ENCODE measurements at regions of chr14 and their contacts with region 1.

Region 1: GRCh38 chr14:71555654-71556559 is 376.3 kb upstream of the RGS6 start:
- DNase-seq: peak; percentile 98
- ATAC-seq: peak; percentile 87
- H3K4me3 ChIP-seq: no peak overlapping the region
- H3K27ac ChIP-seq: peak overlapping the region; percentile 98
- H3K4me1 ChIP-seq: peaks cover 49% of the 10 kb centered on the region
- H3K27me3 ChIP-seq: no peaks in the 10 kb centered on the region
- CTCF ChIP-seq: no peak
- EP300 ChIP-seq: peak; percentile 60 to 87; a peak in 3 of 4 replicates
- POLR2A ChIP-seq: no peak
- RAD21 ChIP-seq: peak; percentile 24; the same call in 1 of the 2 replicates

Region 2: DNA sequence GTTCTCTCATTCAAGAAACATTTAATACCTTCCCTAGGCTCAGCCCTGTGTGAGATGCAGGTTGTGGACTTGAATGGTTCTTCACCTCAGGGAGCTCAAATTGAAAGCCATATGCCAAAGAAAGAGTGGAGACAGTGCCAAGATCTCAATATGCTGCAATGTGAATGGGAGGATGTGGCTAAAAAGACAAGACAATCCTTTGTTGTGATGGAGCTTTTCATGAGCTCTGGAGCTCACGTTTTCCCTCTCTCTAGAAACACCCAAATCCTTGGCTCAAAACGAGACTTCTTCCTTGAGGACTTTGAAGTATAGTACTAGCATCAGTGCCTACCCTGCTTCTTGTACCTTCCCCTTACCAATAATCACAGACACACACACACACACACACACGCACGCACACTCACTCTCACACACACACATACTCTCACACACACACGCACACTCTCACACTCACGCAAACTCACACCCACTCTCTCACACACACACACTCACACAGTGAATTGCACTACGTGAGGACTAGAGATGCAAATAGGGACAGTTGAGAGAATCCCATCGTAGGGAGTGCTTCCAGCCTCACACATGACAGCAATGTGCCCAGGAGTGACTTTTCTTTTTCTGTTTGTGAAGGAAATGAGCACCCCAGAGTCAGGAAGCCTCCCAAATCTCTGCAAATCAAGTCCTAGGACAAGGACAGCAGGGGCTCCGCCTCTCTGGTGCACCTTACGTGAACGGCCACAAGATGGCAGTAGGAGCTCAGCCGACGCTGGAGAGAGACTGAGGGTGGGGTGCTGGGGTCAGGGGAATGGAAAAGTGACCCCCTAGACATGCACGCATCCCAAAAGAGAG is 417.2 kb before region 1 on chr14:
- CTCF ChIA-PET with region 1: interaction called, 5 read pairs
- POLR2A ChIA-PET with region 1: interaction called, 3 read pairs
- RAD21 ChIA-PET with region 1: no interaction called
- SMC1A ChIA-PET with region 1: interaction called, 3 read pairs
- in situ Hi-C with region 1: no loop called
- intact Hi-C with region 1: loop called (anchors 10 kb)
- DNase-seq: peak; percentile 9
- ATAC-seq: peak; percentile 85
- H3K4me3 ChIP-seq: no peak overlapping the region
- H3K27ac ChIP-seq: no peak overlapping the region
- H3K4me1 ChIP-seq: peaks cover 17% of the 10 kb centered on the region
- H3K27me3 ChIP-seq: no peaks in the 10 kb centered on the region
- CTCF ChIP-seq: peak; percentile 87 to 90 (median 88)
- EP300 ChIP-seq: no peak
- POLR2A ChIP-seq: no peak
- RAD21 ChIP-seq: peak; percentile 99

Region 3: DNA sequence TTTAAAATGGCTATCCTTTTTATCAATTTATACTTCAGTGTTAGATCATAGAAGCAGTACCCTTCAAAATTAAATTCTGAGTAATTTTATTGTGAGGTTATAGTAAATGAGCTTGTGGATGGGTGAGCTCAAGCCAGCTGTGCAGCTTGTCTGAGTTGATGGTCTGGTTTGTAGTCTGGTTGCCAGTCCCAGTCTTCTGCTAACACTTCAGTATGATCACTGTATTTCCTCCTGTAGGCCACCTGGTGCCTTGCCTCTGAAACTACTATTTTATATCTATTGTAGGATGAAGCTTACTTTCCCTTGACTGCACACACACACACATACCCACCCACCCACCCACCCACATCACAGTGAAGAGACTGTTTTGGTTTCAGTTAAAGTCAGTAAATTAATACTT is 152.3 kb before region 1 on chr14:
- CTCF ChIA-PET with region 1: interaction called, 4 read pairs
- POLR2A ChIA-PET with region 1: no interaction called
- RAD21 ChIA-PET with region 1: interaction called, 12 read pairs
- SMC1A ChIA-PET with region 1: interaction called, 11 read pairs
- in situ Hi-C with region 1: no loop called
- intact Hi-C with region 1: no loop called
- DNase-seq: peak; percentile 42
- ATAC-seq: peak; percentile 71
- H3K4me3 ChIP-seq: no peak overlapping the region
- H3K27ac ChIP-seq: no peak overlapping the region
- H3K4me1 ChIP-seq: peaks cover 26% of the 10 kb centered on the region
- H3K27me3 ChIP-seq: no peaks in the 10 kb centered on the region
- CTCF ChIP-seq: peak; percentile 7 to 22 (median 10); a peak in 2 of 6 replicates
- EP300 ChIP-seq: no peak
- POLR2A ChIP-seq: no peak
- RAD21 ChIP-seq: peak; percentile 54

Region 4: DNA sequence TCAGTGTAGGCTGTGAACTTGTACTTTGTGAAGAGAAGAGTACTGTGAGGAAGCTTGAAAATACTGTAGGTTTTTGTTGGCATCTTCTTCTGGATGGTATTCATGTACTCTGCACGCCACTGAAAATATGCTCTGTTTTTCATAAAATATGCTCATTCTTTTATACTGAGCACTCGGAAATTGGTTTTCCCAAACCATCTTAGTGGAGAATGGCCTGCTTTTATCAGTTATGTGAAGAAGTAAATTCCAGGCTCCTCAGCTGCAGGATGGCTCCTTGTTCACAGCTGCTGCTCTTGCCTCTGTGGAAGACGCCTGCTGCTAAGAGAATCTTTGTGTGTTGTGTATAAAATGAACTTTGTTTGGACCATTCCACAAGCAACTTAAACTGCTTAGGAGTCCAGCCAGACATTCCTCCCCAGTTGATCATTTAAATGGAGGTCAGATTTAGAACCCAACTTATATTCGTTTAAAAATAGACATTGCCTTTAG is 67.2 kb before region 1 on chr14:
- CTCF ChIA-PET with region 1: interaction called, 3 read pairs
- POLR2A ChIA-PET with region 1: interaction called, 7 read pairs
- RAD21 ChIA-PET with region 1: interaction called, 5 read pairs
- SMC1A ChIA-PET with region 1: interaction called, 12 read pairs
- in situ Hi-C with region 1: no loop called
- intact Hi-C with region 1: no loop called
- DNase-seq: no peak
- ATAC-seq: no peak
- H3K4me3 ChIP-seq: no peak overlapping the region
- H3K27ac ChIP-seq: no peak overlapping the region
- H3K4me1 ChIP-seq: peaks cover 11% of the 10 kb centered on the region
- H3K27me3 ChIP-seq: no peaks in the 10 kb centered on the region
- CTCF ChIP-seq: no peak
- EP300 ChIP-seq: no peak
- POLR2A ChIP-seq: no peak
- RAD21 ChIP-seq: no peak

Region 5: GRCh38 chr14:71566276-71566675 is 10.4 kb after region 1 on chr14:
- CTCF ChIA-PET with region 1: interaction called, 12 read pairs
- POLR2A ChIA-PET with region 1: interaction called, 6 read pairs
- RAD21 ChIA-PET with region 1: interaction called, 26 read pairs
- SMC1A ChIA-PET with region 1: interaction called, 30 read pairs
- in situ Hi-C with region 1: no loop called
- intact Hi-C with region 1: no loop called
- DNase-seq: peak; percentile 81
- ATAC-seq: peak; percentile 85
- H3K4me3 ChIP-seq: no peak overlapping the region
- H3K27ac ChIP-seq: peak overlapping the region; percentile 80
- H3K4me1 ChIP-seq: peaks cover 22% of the 10 kb centered on the region
- H3K27me3 ChIP-seq: no peaks in the 10 kb centered on the region
- CTCF ChIP-seq: no peak
- EP300 ChIP-seq: peak in 1 of 2 experiments; percentile 65; a peak in 2 of 4 replicates
- POLR2A ChIP-seq: no peak
- RAD21 ChIP-seq: no peak

Region 6: DNA sequence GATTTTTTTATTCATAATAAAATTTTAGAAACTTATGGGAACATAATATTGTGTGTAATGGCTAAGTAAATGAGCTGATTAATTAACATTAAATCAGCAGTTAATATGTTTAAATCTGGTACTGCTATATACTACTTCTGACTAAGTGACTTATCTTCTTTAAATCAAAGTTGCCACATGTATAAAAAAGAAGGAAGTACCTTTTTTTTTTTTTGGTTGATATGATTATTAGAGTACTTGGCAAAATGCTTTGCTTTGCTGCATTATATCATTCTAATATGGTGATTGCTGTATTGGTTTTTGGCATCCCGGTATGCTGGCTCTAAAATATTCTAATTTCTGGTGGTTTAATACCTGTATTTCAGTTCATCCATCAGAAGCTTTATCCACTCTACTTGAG is 57.3 kb after region 1 on chr14:
- CTCF ChIA-PET with region 1: interaction called, 3 read pairs
- POLR2A ChIA-PET with region 1: interaction called, 9 read pairs
- RAD21 ChIA-PET with region 1: interaction called, 85 read pairs
- SMC1A ChIA-PET with region 1: interaction called, 48 read pairs
- in situ Hi-C with region 1: no loop called
- intact Hi-C with region 1: loop called (anchors 5 kb)
- DNase-seq: no peak
- ATAC-seq: no peak
- H3K4me3 ChIP-seq: no peak overlapping the region
- H3K27ac ChIP-seq: no peak overlapping the region
- H3K4me1 ChIP-seq: peaks cover 5% of the 10 kb centered on the region; the same call in 1 of the 2 replicates
- H3K27me3 ChIP-seq: no peaks in the 10 kb centered on the region
- CTCF ChIP-seq: no peak
- EP300 ChIP-seq: no peak
- POLR2A ChIP-seq: no peak
- RAD21 ChIP-seq: no peak

Measured in GM12878 (cell line).